ENCODE measurements at regions of chr10 and their contacts with region 1.

Region 1: GRCh38 chr10:75235375-75236177 is at the start of gene COMTD1:
- DNase-seq: peak; percentile 92 to 95
- ATAC-seq: peak; percentile 74 to 88 (median 78)
- H3K4me3 ChIP-seq: peak within 1 kb of the TSS; percentile 74
- H3K4me3 Mint-ChIP-seq: peak within 1 kb of the TSS; percentile 84
- H3K27ac ChIP-seq: peak within 1 kb of the TSS; percentile 53
- H3K27ac Mint-ChIP-seq: peak within 1 kb of the TSS; percentile 68 to 94
- H3K4me1 ChIP-seq: peaks cover 20% of the 10 kb centered on the region
- H3K4me1 Mint-ChIP-seq: peaks cover 9 to 15% of the 10 kb centered on the region in 2 donors
- H3K27me3 ChIP-seq: no peaks in the 10 kb centered on the region
- H3K27me3 Mint-ChIP-seq: no peaks in the 10 kb centered on the region
- CTCF ChIP-seq: peak; percentile 100
- total RNA-seq, gene COMTD1: 19.9 to 25.1 (median 20.1) TPM

Region 2: DNA sequence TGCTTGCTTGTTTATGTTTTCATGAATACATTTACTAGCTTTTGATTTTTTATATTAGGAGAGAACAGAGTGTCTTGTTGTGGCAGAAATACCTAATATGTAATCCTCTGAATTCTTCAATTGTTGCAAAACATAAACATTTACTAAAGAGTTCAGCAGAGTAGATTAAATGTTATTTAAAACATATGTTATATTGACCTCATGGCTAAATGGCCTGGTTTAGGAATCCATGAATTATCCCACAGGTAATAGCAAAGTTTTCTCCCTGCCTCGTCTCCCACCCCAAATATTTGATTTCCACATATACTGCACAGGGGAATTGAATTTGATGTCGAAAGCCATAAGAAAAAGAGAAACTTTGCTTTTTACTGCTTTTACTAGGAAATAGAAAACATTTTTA is 972.7 kb before region 1 on chr10:
- intact Hi-C with region 1: loop called (anchors 1 kb)
- DNase-seq: no peak
- ATAC-seq: no peak
- H3K4me3 ChIP-seq: no peak overlapping the region
- H3K4me3 Mint-ChIP-seq: no peak overlapping the region
- H3K27ac ChIP-seq: no peak overlapping the region
- H3K27ac Mint-ChIP-seq: no peak overlapping the region
- H3K4me1 ChIP-seq: peaks cover 4% of the 10 kb centered on the region
- H3K4me1 Mint-ChIP-seq: peaks cover 0 to 8% of the 10 kb centered on the region in 2 donors
- H3K27me3 ChIP-seq: no peaks in the 10 kb centered on the region
- H3K27me3 Mint-ChIP-seq: no peaks in the 10 kb centered on the region
- CTCF ChIP-seq: no peak

Region 3: DNA sequence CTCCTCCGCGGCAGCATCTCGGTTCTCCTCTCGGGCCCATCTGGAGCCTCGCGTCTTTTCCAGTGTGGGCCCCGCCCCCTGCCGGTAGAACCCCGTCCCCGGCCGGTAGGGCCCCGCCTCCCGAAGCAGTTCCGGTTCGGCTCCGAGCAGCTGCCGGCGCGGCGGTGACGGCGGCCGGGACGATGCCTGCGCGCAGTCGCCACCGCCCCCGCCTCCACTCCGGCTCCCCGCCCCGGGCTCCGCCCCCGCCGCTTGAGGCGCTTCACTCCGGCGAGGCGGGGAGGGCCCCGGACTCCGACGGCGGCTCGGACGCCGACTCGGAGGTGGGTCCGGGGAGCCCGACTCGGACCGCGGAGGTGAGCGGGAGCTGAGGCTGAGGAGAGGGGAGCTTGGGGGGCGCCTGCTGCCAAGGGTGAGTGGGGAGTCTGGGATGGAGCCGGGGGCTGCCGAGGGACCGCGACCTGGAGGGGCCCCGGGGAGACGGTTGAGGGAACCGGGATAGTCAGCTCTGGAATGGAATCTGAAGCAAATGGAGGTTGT is 124.1 kb before region 1 on chr10 and contains the start of gene SAMD8:
- intact Hi-C with region 1: loop called (anchors 2 kb)
- DNase-seq: peak; percentile 91 to 98
- ATAC-seq: peak; percentile 80 to 90 (median 86)
- H3K4me3 ChIP-seq: peak within 1 kb of the TSS; percentile 88
- H3K4me3 Mint-ChIP-seq: peak within 1 kb of the TSS; percentile 98
- H3K27ac ChIP-seq: peak within 1 kb of the TSS; percentile 95
- H3K27ac Mint-ChIP-seq: peak within 1 kb of the TSS; percentile 83 to 94
- H3K4me1 ChIP-seq: peaks cover 21% of the 10 kb centered on the region
- H3K4me1 Mint-ChIP-seq: peaks cover 31 to 37% of the 10 kb centered on the region in 2 donors
- H3K27me3 ChIP-seq: no peaks in the 10 kb centered on the region
- H3K27me3 Mint-ChIP-seq: no peaks in the 10 kb centered on the region
- CTCF ChIP-seq: no peak
- total RNA-seq, gene SAMD8: 26.6 to 30.9 (median 29.6) TPM

Region 4: DNA sequence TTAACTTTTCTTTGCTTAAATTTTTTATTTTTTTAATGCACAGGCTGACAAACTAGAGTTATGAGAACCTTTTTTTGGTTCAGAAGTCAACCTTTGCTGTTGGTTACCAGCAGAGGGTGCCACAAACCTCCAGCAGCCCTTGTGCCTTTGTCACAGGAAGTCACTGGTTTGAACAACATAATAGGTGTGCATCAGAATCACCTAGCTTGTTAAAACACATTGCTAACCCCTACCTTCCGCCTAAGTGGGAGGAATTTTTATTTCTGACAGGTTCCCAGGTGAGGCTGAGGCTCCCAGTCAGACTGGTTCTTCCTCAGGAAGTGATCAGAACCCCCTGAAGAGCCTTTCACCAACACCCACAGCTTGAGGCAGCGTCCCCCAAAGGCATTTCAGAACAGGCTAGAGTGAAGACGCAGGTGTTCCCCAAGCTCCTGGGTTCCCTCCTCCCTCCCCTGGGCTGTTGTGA is 47.6 kb before region 1 on chr10:
- intact Hi-C with region 1: loop called (anchors 1 kb)
- DNase-seq: peak; percentile 55 to 90
- ATAC-seq: peak; percentile 95 to 97 (median 97)
- H3K4me3 ChIP-seq: no peak overlapping the region
- H3K4me3 Mint-ChIP-seq: peak overlapping the region; percentile 31
- H3K27ac ChIP-seq: peak overlapping the region; percentile 67
- H3K27ac Mint-ChIP-seq: peak overlapping the region; percentile 70 to 75
- H3K4me1 ChIP-seq: peaks cover 15% of the 10 kb centered on the region
- H3K4me1 Mint-ChIP-seq: peaks cover 5 to 8% of the 10 kb centered on the region in 2 donors
- H3K27me3 ChIP-seq: no peaks in the 10 kb centered on the region
- H3K27me3 Mint-ChIP-seq: no peaks in the 10 kb centered on the region
- CTCF ChIP-seq: peak; percentile 77

Region 5: GRCh38 chr10:75210282-75211006 is 25.1 kb before region 1 on chr10 and contains the start of gene VDAC2:
- intact Hi-C with region 1: loop called (anchors 1 kb)
- DNase-seq: peak; percentile 98
- ATAC-seq: peak; percentile 89 to 96 (median 90)
- H3K4me3 ChIP-seq: peak within 1 kb of the TSS; percentile 97
- H3K4me3 Mint-ChIP-seq: peak within 1 kb of the TSS; percentile 100
- H3K27ac ChIP-seq: peak within 1 kb of the TSS; percentile 100
- H3K27ac Mint-ChIP-seq: peak within 1 kb of the TSS; percentile 95 to 99
- H3K4me1 ChIP-seq: peaks cover 18% of the 10 kb centered on the region
- H3K4me1 Mint-ChIP-seq: peaks cover 16 to 28% of the 10 kb centered on the region in 2 donors
- H3K27me3 ChIP-seq: no peaks in the 10 kb centered on the region
- H3K27me3 Mint-ChIP-seq: no peaks in the 10 kb centered on the region
- CTCF ChIP-seq: no peak
- total RNA-seq, gene VDAC2: 110 to 124 (median 117) TPM